ENCODE measurements at regions of chr17 and their contacts with region 1.

Region 1: DNA sequence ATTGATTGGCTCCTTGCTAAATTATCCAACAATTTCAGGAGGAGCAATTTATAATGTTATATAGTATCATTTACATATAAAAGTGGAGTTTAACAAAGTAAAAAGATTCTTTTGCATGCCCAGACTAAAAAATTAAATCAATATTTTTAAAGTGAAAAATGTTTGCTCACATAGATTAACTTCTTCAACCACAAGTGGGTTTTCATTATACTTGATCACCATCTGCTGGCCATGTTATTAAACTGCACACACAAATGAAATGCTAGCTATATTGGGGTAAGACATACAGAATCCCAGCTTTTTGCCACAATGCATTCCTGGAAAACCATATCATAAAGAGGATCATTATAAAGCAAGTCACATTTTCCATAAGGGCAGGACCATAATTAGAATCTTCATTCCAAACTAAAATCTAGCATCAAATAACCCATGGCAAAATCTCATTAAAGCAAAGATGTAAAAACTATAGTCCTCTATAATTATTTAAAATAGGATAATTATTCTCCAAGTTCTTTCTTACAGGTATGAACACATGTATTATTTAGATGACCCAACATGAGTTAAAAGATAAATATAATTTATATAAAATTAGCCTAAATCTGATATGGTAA is 26.3 kb downstream of the CEP112 start:
- DNase-seq: peak in 3 of 9 experiments; percentile 11 to 69 (median 61)
- ATAC-seq: peak; percentile 44
- H3K4me3 ChIP-seq: no peak overlapping the region
- H3K4me3 Mint-ChIP-seq: no peak overlapping the region
- H3K27ac ChIP-seq: no peak overlapping the region
- H3K27ac Mint-ChIP-seq: no peak overlapping the region
- H3K4me1 ChIP-seq: no peaks in the 10 kb centered on the region
- H3K4me1 Mint-ChIP-seq: no peaks in the 10 kb centered on the region
- H3K27me3 ChIP-seq: no peaks in the 10 kb centered on the region
- H3K27me3 Mint-ChIP-seq: no peaks in the 10 kb centered on the region
- CTCF ChIP-seq: peak; percentile 94

Region 2: DNA sequence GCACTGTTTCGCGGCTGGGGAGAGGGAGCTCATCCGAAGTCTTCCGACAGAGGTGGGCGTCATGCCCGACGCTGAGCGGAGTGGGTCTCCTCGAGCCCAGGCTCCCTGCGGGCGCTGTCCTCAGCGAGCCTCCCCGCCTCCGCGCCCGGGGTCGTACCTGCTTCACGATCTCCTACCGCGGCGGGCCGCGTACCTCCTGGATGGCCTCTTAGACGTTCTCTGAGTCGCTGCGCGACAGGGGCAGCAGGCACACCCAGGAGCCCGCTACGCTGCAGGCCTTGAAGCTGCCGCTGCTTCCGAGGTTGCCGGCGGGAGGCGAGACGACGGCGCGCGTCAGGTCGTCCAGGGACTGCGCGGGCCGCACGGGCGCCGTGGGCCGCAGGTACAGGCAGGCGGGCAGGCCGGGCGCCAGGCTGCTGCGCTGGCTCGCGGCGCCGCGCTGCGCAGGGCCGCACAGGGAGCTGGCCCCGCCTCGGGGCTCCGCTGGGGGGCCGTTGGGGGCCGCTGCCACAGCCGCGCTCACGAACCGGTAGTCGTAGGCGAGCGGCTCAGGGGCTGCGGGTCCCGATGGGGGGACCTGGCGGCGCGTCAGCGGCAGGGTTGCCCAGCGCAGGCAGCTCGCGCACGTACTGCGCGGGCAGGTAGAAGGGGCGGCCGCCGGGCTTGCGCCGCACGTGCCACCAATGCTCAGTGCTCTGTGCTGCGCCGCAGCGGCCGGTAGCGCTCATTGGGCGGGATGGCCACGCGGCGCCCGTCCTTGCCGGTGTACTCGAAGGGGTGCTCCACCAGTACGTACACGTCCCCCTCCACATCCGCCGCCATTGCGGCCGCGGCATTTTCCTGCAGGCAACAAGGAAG is 1387.1 kb before region 1 on chr17:
- CTCF ChIA-PET with region 1: no interaction called
- POLR2A ChIA-PET with region 1: no interaction called
- intact Hi-C with region 1: loop called in 1 of 2 experiments (anchors 5 kb)
- DNase-seq: peak in 4 of 9 experiments; percentile 28 to 62 (median 51)
- ATAC-seq: no peak
- H3K4me3 ChIP-seq: peak overlapping the region in 1 of 2 experiments; percentile 24
- H3K4me3 Mint-ChIP-seq: peak overlapping the region; percentile 58
- H3K27ac ChIP-seq: no peak overlapping the region
- H3K27ac Mint-ChIP-seq: no peak overlapping the region
- H3K4me1 ChIP-seq: peaks cover 37% of the 10 kb centered on the region
- H3K4me1 Mint-ChIP-seq: peaks cover 26% of the 10 kb centered on the region
- H3K27me3 ChIP-seq: no peaks in the 10 kb centered on the region
- H3K27me3 Mint-ChIP-seq: peaks cover 2% of the 10 kb centered on the region
- CTCF ChIP-seq: no peak

Region 3: GRCh38 chr17:65231662-65232335 is 933.8 kb before region 1 on chr17:
- CTCF ChIA-PET with region 1: interaction called, 24 read pairs
- POLR2A ChIA-PET with region 1: no interaction called
- intact Hi-C with region 1: loop called (anchors 1 kb)
- DNase-seq: peak in 7 of 9 experiments; percentile 15 to 64 (median 28)
- ATAC-seq: no peak
- H3K4me3 ChIP-seq: no peak overlapping the region
- H3K4me3 Mint-ChIP-seq: no peak overlapping the region
- H3K27ac ChIP-seq: no peak overlapping the region
- H3K27ac Mint-ChIP-seq: no peak overlapping the region
- H3K4me1 ChIP-seq: peaks cover 21% of the 10 kb centered on the region
- H3K4me1 Mint-ChIP-seq: peaks cover 20% of the 10 kb centered on the region
- H3K27me3 ChIP-seq: no peaks in the 10 kb centered on the region
- H3K27me3 Mint-ChIP-seq: peaks cover 5% of the 10 kb centered on the region
- CTCF ChIP-seq: no peak

Region 4: GRCh38 chr17:65278050-65278819 is 887.4 kb before region 1 on chr17:
- CTCF ChIA-PET with region 1: interaction called, 3 read pairs
- POLR2A ChIA-PET with region 1: no interaction called
- intact Hi-C with region 1: loop called in 1 of 2 experiments (anchors 5 kb)
- DNase-seq: peak in 5 of 9 experiments; percentile 13 to 32 (median 20)
- ATAC-seq: peak; percentile 48
- H3K4me3 ChIP-seq: no peak overlapping the region
- H3K4me3 Mint-ChIP-seq: no peak overlapping the region
- H3K27ac ChIP-seq: no peak overlapping the region
- H3K27ac Mint-ChIP-seq: no peak overlapping the region
- H3K4me1 ChIP-seq: no peaks in the 10 kb centered on the region
- H3K4me1 Mint-ChIP-seq: peaks cover 11% of the 10 kb centered on the region
- H3K27me3 ChIP-seq: no peaks in the 10 kb centered on the region
- H3K27me3 Mint-ChIP-seq: peaks cover 18% of the 10 kb centered on the region
- CTCF ChIP-seq: peak; percentile 27

Region 5: DNA sequence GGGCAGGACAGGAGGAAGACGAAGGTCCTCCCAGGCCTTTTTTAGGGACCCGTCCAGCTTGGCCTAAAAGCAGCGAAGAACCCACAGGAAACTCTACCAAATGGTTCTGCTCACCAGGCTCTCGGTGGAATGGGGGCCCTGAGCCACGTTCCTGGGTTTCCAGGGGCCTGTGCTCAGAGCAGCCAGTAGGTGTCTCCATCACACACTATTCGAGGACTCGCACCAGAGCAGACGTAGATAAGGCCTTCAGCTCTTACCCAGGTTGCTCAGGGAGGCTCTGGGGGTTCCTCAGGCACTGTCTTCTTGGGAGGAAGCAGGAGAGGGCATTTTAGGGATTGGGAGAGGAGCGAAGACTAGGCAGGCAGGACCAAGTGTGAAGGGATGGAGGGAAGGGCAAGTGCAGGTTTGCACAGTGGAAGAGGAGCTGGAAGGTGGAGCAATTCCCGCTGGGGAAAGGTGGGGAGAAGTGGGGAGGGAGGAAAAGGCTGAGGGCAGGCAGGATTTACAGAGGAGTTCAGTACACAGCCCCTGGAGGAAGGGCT is 871.4 kb before region 1 on chr17:
- CTCF ChIA-PET with region 1: interaction called, 58 read pairs
- POLR2A ChIA-PET with region 1: no interaction called
- intact Hi-C with region 1: loop called in 1 of 2 experiments (anchors 1 kb)
- DNase-seq: peak; percentile 33 to 76 (median 61)
- ATAC-seq: peak; percentile 80
- H3K4me3 ChIP-seq: no peak overlapping the region
- H3K4me3 Mint-ChIP-seq: no peak overlapping the region
- H3K27ac ChIP-seq: no peak overlapping the region
- H3K27ac Mint-ChIP-seq: no peak overlapping the region
- H3K4me1 ChIP-seq: no peaks in the 10 kb centered on the region
- H3K4me1 Mint-ChIP-seq: peaks cover 4% of the 10 kb centered on the region
- H3K27me3 ChIP-seq: no peaks in the 10 kb centered on the region
- H3K27me3 Mint-ChIP-seq: no peaks in the 10 kb centered on the region
- CTCF ChIP-seq: peak; percentile 60

Region 6: GRCh38 chr17:65418628-65419027 is 747.0 kb before region 1 on chr17:
- CTCF ChIA-PET with region 1: interaction called, 3 read pairs
- POLR2A ChIA-PET with region 1: no interaction called
- intact Hi-C with region 1: loop called in 1 of 2 experiments (anchors 5 kb)
- DNase-seq: peak in 2 of 9 experiments; percentile 6 to 11
- ATAC-seq: no peak
- H3K4me3 ChIP-seq: no peak overlapping the region
- H3K4me3 Mint-ChIP-seq: no peak overlapping the region
- H3K27ac ChIP-seq: no peak overlapping the region
- H3K27ac Mint-ChIP-seq: no peak overlapping the region
- H3K4me1 ChIP-seq: no peaks in the 10 kb centered on the region
- H3K4me1 Mint-ChIP-seq: no peaks in the 10 kb centered on the region
- H3K27me3 ChIP-seq: peaks cover 2 to 4% of the 10 kb centered on the region in 2 experiments
- H3K27me3 Mint-ChIP-seq: peaks cover 8% of the 10 kb centered on the region
- CTCF ChIP-seq: no peak

Region 7: DNA sequence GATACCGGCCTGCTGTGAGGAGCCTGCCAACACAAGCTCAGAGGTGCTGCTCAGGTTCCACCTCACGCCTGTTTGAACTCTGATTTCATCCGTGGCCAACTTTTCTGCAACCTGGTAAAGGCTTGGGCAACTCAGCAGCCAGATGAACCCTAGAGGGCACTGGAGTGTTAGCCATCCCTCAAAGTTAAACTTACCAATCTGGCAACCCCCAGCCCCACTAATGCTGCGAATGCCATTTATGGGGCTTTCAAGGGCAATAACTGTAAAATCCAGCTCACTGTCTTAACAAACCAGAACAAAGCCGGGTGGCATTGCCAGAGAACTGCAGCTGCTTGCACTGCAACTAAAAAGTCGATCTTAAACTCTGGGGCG is 709.7 kb before region 1 on chr17:
- CTCF ChIA-PET with region 1: no interaction called
- POLR2A ChIA-PET with region 1: no interaction called
- intact Hi-C with region 1: loop called in 1 of 2 experiments (anchors 2 kb)
- DNase-seq: peak in 4 of 9 experiments; percentile 10 to 48 (median 22)
- ATAC-seq: peak; percentile 36
- H3K4me3 ChIP-seq: no peak overlapping the region
- H3K4me3 Mint-ChIP-seq: no peak overlapping the region
- H3K27ac ChIP-seq: no peak overlapping the region
- H3K27ac Mint-ChIP-seq: no peak overlapping the region
- H3K4me1 ChIP-seq: no peaks in the 10 kb centered on the region
- H3K4me1 Mint-ChIP-seq: peaks cover 6% of the 10 kb centered on the region
- H3K27me3 ChIP-seq: no peaks in the 10 kb centered on the region
- H3K27me3 Mint-ChIP-seq: no peaks in the 10 kb centered on the region
- CTCF ChIP-seq: no peak

Region 8: GRCh38 chr17:65931246-65932149 is 234.1 kb before region 1 on chr17:
- CTCF ChIA-PET with region 1: no interaction called
- POLR2A ChIA-PET with region 1: no interaction called
- intact Hi-C with region 1: no loop called
- DNase-seq: no peak
- ATAC-seq: no peak
- H3K4me3 ChIP-seq: no peak overlapping the region
- H3K4me3 Mint-ChIP-seq: no peak overlapping the region
- H3K27ac ChIP-seq: no peak overlapping the region
- H3K27ac Mint-ChIP-seq: no peak overlapping the region
- H3K4me1 ChIP-seq: no peaks in the 10 kb centered on the region
- H3K4me1 Mint-ChIP-seq: no peaks in the 10 kb centered on the region
- H3K27me3 ChIP-seq: no peaks in the 10 kb centered on the region
- H3K27me3 Mint-ChIP-seq: no peaks in the 10 kb centered on the region
- CTCF ChIP-seq: no peak

Region 9: GRCh38 chr17:65966072-65966695 is 199.4 kb before region 1 on chr17:
- CTCF ChIA-PET with region 1: no interaction called
- POLR2A ChIA-PET with region 1: no interaction called
- intact Hi-C with region 1: no loop called
- DNase-seq: no peak
- ATAC-seq: no peak
- H3K4me3 ChIP-seq: no peak overlapping the region
- H3K4me3 Mint-ChIP-seq: no peak overlapping the region
- H3K27ac ChIP-seq: no peak overlapping the region
- H3K27ac Mint-ChIP-seq: no peak overlapping the region
- H3K4me1 ChIP-seq: no peaks in the 10 kb centered on the region
- H3K4me1 Mint-ChIP-seq: no peaks in the 10 kb centered on the region
- H3K27me3 ChIP-seq: no peaks in the 10 kb centered on the region
- H3K27me3 Mint-ChIP-seq: peaks cover 3% of the 10 kb centered on the region
- CTCF ChIP-seq: no peak

Region 10: DNA sequence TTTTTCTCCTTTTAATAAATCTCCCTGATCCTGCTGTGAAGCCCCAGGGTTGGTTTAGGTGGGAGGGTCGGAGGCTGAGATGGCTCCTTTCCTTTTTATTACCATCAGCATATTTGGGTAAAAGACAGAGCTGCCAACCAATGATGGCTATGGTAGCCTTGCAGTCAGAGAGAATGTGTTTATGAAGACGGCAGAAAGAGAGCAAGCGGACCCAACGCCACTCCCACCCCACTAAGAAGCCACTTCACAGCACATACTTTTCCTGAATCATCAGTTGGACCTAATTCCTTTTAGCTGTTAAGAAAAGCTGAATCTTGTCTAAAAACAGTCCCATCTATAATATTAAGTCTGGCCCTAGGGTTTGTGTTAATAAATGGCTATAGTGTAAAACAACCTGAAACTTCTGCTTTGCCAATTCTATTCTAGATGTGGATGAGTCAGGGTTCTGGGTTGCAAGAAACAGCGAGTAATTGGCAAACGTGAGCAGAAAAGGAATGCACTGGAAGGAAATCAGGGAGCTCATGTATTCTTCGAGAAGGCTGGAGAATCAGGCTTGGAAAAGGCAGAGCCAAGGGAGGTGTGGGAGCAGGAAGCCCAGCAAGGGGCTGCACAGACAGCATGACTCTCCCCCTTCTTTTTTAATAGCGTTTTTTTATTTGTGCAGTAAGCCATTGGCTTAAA is 102.8 kb after region 1 on chr17:
- CTCF ChIA-PET with region 1: no interaction called
- POLR2A ChIA-PET with region 1: no interaction called
- intact Hi-C with region 1: no loop called
- DNase-seq: no peak
- ATAC-seq: no peak
- H3K4me3 ChIP-seq: no peak overlapping the region
- H3K4me3 Mint-ChIP-seq: no peak overlapping the region
- H3K27ac ChIP-seq: no peak overlapping the region
- H3K27ac Mint-ChIP-seq: no peak overlapping the region
- H3K4me1 ChIP-seq: no peaks in the 10 kb centered on the region
- H3K4me1 Mint-ChIP-seq: no peaks in the 10 kb centered on the region
- H3K27me3 ChIP-seq: no peaks in the 10 kb centered on the region
- H3K27me3 Mint-ChIP-seq: no peaks in the 10 kb centered on the region
- CTCF ChIP-seq: no peak